Activated B cell treated with CpG ODN at 0.5 μM for 24 hours (primary cell): ENCODE measurements at regions of chr12 and their contacts with region 1.

Region 1: GRCh38 chr12:101939856-101940265 is 62.5 kb downstream of the DRAM1 start:
- DNase-seq: no peak
- ATAC-seq: peak; percentile 45
- H3K4me3 Mint-ChIP-seq: peak overlapping the region; percentile 13
- H3K27ac Mint-ChIP-seq: peak overlapping the region; percentile 74
- H3K4me1 Mint-ChIP-seq: peaks cover 62% of the 10 kb centered on the region
- H3K27me3 Mint-ChIP-seq: no peaks in the 10 kb centered on the region
- CTCF ChIP-seq: peak; percentile 21

Region 2: GRCh38 chr12:101634724-101635123 is 305.1 kb before region 1 on chr12:
- CTCF ChIA-PET with region 1: no interaction called
- POLR2A ChIA-PET with region 1: no interaction called
- intact Hi-C with region 1: loop called (anchors 10 kb)
- DNase-seq: no peak
- ATAC-seq: peak; percentile 92
- H3K4me3 Mint-ChIP-seq: peak overlapping the region; percentile 69
- H3K27ac Mint-ChIP-seq: peak overlapping the region; percentile 94
- H3K4me1 Mint-ChIP-seq: peaks cover 41% of the 10 kb centered on the region
- H3K27me3 Mint-ChIP-seq: no peaks in the 10 kb centered on the region
- CTCF ChIP-seq: no peak

Region 3: DNA sequence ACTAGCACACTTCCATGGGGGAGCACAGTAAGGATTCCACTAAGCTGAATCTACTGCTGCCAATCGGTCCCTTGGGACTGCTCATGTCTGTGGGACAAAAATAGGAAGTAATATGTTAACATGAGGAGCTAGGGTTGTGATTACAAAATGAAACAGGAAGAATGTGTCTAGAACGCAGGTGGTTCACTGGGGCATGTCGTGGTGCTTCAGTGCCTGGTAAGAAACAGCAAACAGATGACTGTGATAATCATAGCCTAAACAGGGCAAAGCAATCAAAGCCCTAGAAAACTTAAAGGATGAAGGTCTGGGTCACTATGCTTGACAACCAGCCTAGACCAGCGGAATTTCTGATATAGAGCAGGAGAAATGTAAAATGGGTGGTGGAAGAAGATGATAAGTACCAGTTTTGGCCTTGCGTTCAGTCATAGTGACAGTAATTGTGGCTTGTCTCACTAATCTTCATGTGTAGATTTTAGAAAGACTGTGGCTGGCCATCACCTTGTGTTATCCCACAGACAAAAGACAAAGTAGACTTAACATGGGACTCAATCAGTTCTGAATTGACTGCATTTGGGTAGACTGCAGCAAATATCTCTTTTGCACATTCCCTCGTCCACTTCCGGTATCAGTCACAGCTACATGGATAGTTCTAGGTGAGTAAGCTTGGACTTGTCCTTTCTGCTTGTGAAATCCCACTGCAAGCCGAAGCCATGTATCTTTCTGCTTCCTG is 70.6 kb after region 1 on chr12:
- CTCF ChIA-PET with region 1: interaction called, 5 read pairs
- POLR2A ChIA-PET with region 1: no interaction called
- intact Hi-C with region 1: loop called (anchors 1 kb)
- DNase-seq: peak; percentile 23
- ATAC-seq: peak; percentile 96
- H3K4me3 Mint-ChIP-seq: peak overlapping the region; percentile 63
- H3K27ac Mint-ChIP-seq: peak overlapping the region; percentile 96
- H3K4me1 Mint-ChIP-seq: peaks cover 33% of the 10 kb centered on the region
- H3K27me3 Mint-ChIP-seq: no peaks in the 10 kb centered on the region
- CTCF ChIP-seq: no peak

Region 4: DNA sequence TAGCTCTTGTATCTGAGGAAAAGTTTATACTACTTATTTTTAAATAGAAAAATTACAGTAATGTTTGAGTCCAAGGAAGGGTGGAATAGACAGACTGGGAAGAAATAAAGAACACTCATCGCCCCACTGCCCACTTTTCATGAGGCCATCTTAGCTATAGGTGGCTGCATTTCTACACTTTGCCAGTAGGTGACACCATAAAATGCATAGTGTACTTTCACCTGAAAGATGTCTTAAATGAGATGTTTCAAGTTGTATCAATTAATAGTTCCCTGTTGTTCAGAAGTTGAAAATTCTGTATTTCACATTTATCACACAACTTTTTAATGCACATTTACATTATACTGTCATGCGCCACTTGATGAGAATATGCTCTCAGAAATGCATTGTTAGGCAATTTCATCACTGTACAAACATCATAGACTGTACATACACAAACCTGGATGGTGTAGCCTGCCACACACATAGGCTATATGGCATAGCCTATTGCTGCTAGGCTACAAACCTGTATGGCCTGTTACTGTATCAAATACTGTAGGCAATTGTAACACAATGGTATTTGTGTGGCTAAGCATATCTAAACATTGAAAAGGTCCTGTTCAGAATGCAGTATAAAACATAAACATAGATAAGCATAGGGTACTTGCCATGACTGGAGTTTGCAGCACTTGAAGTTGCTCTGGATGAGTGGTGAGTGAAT is 230.2 kb after region 1 on chr12:
- CTCF ChIA-PET with region 1: no interaction called
- POLR2A ChIA-PET with region 1: no interaction called
- intact Hi-C with region 1: loop called (anchors 5 kb)
- DNase-seq: no peak
- ATAC-seq: peak; percentile 54
- H3K4me3 Mint-ChIP-seq: no peak overlapping the region
- H3K27ac Mint-ChIP-seq: no peak overlapping the region
- H3K4me1 Mint-ChIP-seq: no peaks in the 10 kb centered on the region
- H3K27me3 Mint-ChIP-seq: no peaks in the 10 kb centered on the region
- CTCF ChIP-seq: no peak

Region 5: DNA sequence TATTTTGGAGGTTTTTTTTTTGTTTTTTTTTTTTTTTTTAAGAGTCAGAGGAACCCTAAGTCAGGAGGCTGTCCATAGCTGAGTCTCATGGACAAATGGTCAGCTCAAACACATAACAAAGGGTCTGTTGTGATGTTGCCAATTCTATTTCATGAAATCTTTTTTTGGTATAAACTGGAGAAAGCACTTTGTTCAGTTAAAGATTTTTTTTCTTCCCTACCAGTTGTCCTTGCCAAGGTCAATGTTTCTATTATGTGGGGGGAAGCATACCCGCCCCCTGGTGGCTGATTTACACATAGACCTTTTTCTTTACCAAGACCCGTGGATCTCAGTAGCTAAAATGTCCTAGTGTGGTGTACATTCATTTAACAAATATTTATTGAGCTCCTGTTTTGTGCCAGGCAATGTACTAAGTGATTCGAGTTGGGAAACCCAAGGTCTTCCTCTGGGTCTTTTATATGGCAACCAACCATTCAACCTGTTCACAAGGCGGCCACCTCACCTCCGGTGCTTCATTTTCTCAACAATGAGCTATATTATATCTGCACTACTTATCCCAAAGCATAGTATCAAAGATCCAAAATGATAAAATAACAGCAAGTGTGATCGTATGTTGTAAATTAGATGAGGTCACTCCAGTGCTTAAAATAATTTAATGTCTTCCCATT is 762.7 kb after region 1 on chr12:
- CTCF ChIA-PET with region 1: interaction called, 45 read pairs
- POLR2A ChIA-PET with region 1: no interaction called
- intact Hi-C with region 1: loop called (anchors 1 kb)
- DNase-seq: no peak
- ATAC-seq: peak; percentile 45
- H3K4me3 Mint-ChIP-seq: no peak overlapping the region
- H3K27ac Mint-ChIP-seq: no peak overlapping the region
- H3K4me1 Mint-ChIP-seq: no peaks in the 10 kb centered on the region
- H3K27me3 Mint-ChIP-seq: peaks cover 11% of the 10 kb centered on the region
- CTCF ChIP-seq: no peak

Region 6: GRCh38 chr12:103441437-103442181 is 1501.7 kb after region 1 on chr12:
- CTCF ChIA-PET with region 1: no interaction called
- POLR2A ChIA-PET with region 1: no interaction called
- intact Hi-C with region 1: loop called (anchors 5 kb)
- DNase-seq: peak; percentile 39
- ATAC-seq: peak; percentile 92
- H3K4me3 Mint-ChIP-seq: peak overlapping the region; percentile 91
- H3K27ac Mint-ChIP-seq: peak overlapping the region; percentile 98
- H3K4me1 Mint-ChIP-seq: peaks cover 46% of the 10 kb centered on the region
- H3K27me3 Mint-ChIP-seq: no peaks in the 10 kb centered on the region
- CTCF ChIP-seq: no peak